ENCODE measurements at regions of chr2 and their contacts with region 1.

Region 1: GRCh38 chr2:74334931-74335333 is 8.3 kb downstream of the SLC4A5 start:
- DNase-seq: peak; percentile 72
- ATAC-seq: peak; percentile 97
- H3K4me3 ChIP-seq: no peak overlapping the region
- H3K27ac ChIP-seq: no peak overlapping the region
- H3K4me1 ChIP-seq: no peaks in the 10 kb centered on the region
- H3K27me3 ChIP-seq: peaks cover 12% of the 10 kb centered on the region
- CTCF ChIP-seq: peak; percentile 86
- POLR2A ChIP-seq: no peak
- RAD21 ChIP-seq: peak; percentile 74

Region 2: DNA sequence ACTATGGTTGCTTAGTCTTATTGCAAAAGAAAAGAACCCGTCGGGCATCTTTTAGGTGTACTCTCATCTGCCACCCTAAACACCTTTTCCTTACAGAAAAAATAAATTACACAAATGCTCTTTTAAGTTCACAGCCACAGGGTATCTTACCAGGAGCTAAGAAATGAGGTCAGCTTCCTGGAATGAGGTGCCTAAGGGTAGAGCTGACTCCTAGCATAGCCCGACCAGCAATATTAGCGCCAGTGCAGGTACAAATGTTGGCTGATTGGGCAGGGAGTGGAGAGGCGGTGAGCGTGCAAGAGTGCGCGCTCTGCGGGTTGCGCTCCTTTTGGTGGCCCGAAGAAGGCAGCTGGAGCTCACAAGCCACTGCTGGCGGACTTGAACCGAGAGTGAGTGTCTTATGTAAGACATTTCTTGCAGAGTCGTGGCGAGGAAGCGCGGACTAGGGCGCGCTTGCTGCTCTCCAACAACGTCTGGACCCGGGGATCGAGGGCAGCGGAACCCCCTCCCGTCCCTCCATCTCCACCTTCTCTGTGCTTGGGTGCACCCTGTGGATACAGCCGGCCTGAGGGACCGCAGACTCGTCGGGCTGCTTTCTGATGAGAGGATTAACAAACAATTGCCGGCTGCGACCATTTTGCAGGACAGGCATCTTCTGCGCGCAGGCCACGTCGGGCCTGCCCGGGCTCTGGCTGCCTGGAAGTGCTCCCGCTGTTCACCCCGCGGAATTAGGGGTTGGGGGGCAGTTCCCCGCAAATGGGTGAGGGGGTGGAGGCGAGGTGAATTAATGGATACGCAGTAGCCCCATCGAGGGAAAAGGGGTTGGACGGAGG is 204.6 kb before region 1 on chr2:
- CTCF ChIA-PET with region 1: no interaction called
- POLR2A ChIA-PET with region 1: no interaction called
- dilution Hi-C with region 1: no loop called
- in situ Hi-C with region 1: no loop called
- intact Hi-C with region 1: no loop called
- DNase-seq: no peak
- ATAC-seq: no peak; the same call in 1 of the 2 replicates
- H3K4me3 ChIP-seq: no peak overlapping the region
- H3K27ac ChIP-seq: no peak overlapping the region
- H3K4me1 ChIP-seq: no peaks in the 10 kb centered on the region
- H3K27me3 ChIP-seq: peaks cover 14% of the 10 kb centered on the region
- CTCF ChIP-seq: no peak
- POLR2A ChIP-seq: no peak
- RAD21 ChIP-seq: no peak

Region 3: GRCh38 chr2:74357627-74358026 is 22.7 kb after region 1 on chr2:
- CTCF ChIA-PET with region 1: interaction called, 17 read pairs
- POLR2A ChIA-PET with region 1: no interaction called
- dilution Hi-C with region 1: no loop called
- in situ Hi-C with region 1: no loop called
- intact Hi-C with region 1: no loop called
- DNase-seq: peak; percentile 8
- ATAC-seq: no peak
- H3K4me3 ChIP-seq: no peak overlapping the region
- H3K27ac ChIP-seq: no peak overlapping the region
- H3K4me1 ChIP-seq: no peaks in the 10 kb centered on the region
- H3K27me3 ChIP-seq: no peaks in the 10 kb centered on the region
- CTCF ChIP-seq: no peak
- POLR2A ChIP-seq: no peak
- RAD21 ChIP-seq: no peak

Region 4: DNA sequence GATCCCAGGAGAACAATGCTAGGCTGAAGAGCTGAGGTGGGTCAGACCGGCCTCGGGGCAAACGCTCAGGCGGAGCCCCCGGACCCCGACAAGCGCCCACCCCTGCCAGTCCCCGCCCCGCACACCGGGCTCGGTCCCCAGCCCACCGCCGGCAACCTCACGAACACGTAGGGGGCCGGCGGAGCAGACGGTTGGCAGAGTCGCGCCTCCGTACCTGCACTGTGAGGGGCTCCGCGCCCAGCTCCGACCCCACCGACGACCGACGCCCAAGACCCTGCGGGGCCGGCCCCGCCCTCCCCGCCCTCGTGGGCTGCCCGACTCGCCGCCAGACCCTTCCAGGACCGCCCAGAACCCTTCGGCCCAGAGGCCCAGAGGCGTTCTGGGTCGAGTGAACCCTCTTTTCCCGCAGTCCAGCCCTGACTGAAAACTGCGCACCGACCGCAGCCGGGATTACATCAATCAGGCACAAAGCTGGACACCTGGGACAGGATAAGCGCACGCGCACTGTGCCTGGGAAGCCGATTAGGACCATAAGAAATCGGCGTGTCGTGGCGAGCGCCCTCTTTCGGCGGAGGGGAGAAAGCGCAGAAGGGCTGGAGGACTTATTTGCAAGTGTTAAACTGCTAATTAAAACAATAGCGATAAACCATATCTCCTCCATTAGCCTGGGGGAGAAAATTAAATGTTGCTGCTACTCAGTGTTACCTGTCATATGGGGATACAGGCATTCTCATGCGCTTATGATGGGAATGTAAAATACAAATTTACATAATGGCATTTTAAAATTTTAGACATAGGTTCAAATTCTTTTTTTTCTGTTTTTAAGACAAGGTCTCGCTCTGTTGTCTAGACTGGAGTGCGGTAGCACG is 56.9 kb after region 1 on chr2:
- CTCF ChIA-PET with region 1: interaction called, 6 read pairs
- POLR2A ChIA-PET with region 1: no interaction called
- dilution Hi-C with region 1: no loop called
- in situ Hi-C with region 1: no loop called
- intact Hi-C with region 1: loop called (anchors 5 kb)
- DNase-seq: peak; percentile 85
- ATAC-seq: peak; percentile 92
- H3K4me3 ChIP-seq: peak overlapping the region; percentile 83
- H3K27ac ChIP-seq: peak overlapping the region; percentile 95
- H3K4me1 ChIP-seq: peaks cover 9% of the 10 kb centered on the region
- H3K27me3 ChIP-seq: peaks cover 4% of the 10 kb centered on the region
- CTCF ChIP-seq: peak; percentile 96
- POLR2A ChIP-seq: peak; percentile 38; the same call in 1 of the 2 replicates
- RAD21 ChIP-seq: peak; percentile 66

Measured in IMR-90 (cell line).